GM12878 (cell line): ENCODE measurements at regions of chr10 and their contacts with region 1.

Region 1: GRCh38 chr10:30456266-30456665 is 22.3 kb downstream of the MAP3K8 start:
- DNase-seq: peak; percentile 65
- ATAC-seq: peak; percentile 88
- H3K4me3 ChIP-seq: no peak overlapping the region
- H3K27ac ChIP-seq: peak overlapping the region; percentile 64
- H3K4me1 ChIP-seq: peaks cover 15% of the 10 kb centered on the region
- H3K27me3 ChIP-seq: no peaks in the 10 kb centered on the region
- CTCF ChIP-seq: no peak
- EP300 ChIP-seq: no peak
- POLR2A ChIP-seq: no peak
- RAD21 ChIP-seq: no peak; the same call in 1 of the 2 replicates

Region 2: DNA sequence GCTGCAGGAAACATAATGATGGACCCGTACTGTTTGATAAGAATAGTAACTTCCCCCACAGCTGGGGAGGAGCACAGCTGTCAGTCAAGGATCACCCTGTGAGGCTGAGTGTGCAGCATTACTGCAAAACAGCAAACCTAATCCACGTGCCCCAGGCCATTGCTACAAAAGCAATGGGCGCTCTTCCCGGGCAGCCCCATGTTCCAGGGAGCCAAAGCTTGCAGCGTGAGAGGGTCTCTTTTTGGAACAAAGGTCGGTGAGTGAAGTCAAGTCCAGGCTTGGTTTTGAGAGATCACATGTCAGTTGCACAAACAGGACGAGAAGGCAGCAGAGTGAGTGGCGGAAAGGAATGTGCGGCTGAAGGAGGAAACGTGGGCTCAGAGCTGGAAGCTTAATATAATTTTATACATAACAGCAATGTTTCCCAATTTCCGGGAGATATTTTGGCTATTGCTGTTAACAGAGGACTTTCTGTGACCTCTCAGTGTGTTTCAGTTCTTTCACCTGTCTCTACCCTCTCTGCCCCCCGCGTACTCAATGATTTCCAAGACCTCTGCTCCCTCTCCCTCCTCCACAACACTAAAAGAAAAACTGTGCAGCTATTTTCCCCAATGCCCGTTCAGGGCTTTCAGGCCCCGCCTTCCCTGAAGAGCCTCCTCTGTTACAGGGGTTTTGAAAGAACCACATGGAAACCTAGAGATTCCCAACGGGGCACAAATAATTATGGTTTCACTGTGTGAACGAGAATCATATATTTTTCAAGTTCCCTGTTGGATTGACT is 236.1 kb before region 1 on chr10:
- CTCF ChIA-PET with region 1: no interaction called
- POLR2A ChIA-PET with region 1: no interaction called
- RAD21 ChIA-PET with region 1: no interaction called
- SMC1A ChIA-PET with region 1: no interaction called
- in situ Hi-C with region 1: no loop called
- intact Hi-C with region 1: no loop called
- DNase-seq: no peak
- ATAC-seq: no peak
- H3K4me3 ChIP-seq: no peak overlapping the region
- H3K27ac ChIP-seq: no peak overlapping the region
- H3K4me1 ChIP-seq: peaks cover 3% of the 10 kb centered on the region; the same call in 1 of the 2 replicates
- H3K27me3 ChIP-seq: no peaks in the 10 kb centered on the region
- CTCF ChIP-seq: no peak
- EP300 ChIP-seq: no peak
- POLR2A ChIP-seq: no peak
- RAD21 ChIP-seq: no peak

Region 3: DNA sequence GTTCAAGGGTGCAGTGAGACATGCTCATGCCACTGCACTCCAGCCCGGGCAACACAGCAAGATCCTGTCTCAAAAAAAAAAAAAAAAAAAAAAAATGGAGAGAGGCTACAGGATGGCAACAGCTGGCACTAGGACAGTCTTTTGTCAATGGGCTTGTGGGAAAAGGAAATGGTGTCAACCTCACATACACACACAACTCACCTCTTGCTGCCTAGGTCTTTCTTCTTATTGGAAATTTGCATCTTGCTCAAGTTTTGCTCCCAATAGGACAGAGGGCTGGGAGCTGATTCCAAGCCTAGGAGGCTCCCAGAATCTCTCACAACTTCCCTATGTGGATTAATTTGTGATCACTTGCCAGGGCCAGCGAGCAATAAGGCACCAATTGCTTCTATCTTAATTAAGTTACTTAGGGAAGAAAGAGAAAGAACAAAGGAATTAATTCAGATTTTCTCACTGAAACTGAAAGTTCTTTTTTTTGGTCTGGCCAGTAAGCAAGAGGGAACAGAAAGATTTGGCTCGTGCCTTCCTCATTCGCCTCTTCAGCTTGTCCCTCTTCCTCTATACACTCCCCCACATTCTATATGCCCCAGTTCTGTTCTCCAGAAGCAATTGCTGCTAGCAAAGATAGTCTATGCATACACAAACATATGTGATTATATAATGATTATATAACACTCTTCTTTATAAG is 11.5 kb after region 1 on chr10:
- CTCF ChIA-PET with region 1: interaction called, 17 read pairs
- POLR2A ChIA-PET with region 1: interaction called, 4 read pairs
- RAD21 ChIA-PET with region 1: interaction called, 9 read pairs
- SMC1A ChIA-PET with region 1: interaction called, 35 read pairs
- in situ Hi-C with region 1: no loop called
- intact Hi-C with region 1: no loop called
- DNase-seq: no peak
- ATAC-seq: peak; percentile 94
- H3K4me3 ChIP-seq: no peak overlapping the region
- H3K27ac ChIP-seq: peak overlapping the region; percentile 62
- H3K4me1 ChIP-seq: peaks cover 11% of the 10 kb centered on the region
- H3K27me3 ChIP-seq: no peaks in the 10 kb centered on the region
- CTCF ChIP-seq: no peak
- EP300 ChIP-seq: no peak
- POLR2A ChIP-seq: no peak
- RAD21 ChIP-seq: no peak

Region 4: GRCh38 chr10:30765616-30766015 is 309.4 kb after region 1 on chr10:
- CTCF ChIA-PET with region 1: no interaction called
- POLR2A ChIA-PET with region 1: no interaction called
- RAD21 ChIA-PET with region 1: no interaction called
- SMC1A ChIA-PET with region 1: no interaction called
- in situ Hi-C with region 1: no loop called
- intact Hi-C with region 1: no loop called
- DNase-seq: no peak
- ATAC-seq: no peak
- H3K4me3 ChIP-seq: no peak overlapping the region
- H3K27ac ChIP-seq: no peak overlapping the region
- H3K4me1 ChIP-seq: 0 out of 2 replicates have a peak, but pooled peaks cover 5% of the 10 kb centered on the region
- H3K27me3 ChIP-seq: no peaks in the 10 kb centered on the region
- CTCF ChIP-seq: no peak
- EP300 ChIP-seq: no peak
- POLR2A ChIP-seq: no peak
- RAD21 ChIP-seq: no peak